HAP-1 (cell line): ENCODE measurements at regions of chrX and their contacts with region 1.

Region 1: GRCh38 chrX:154534862-154535670 is 11.6 kb downstream of the G6PD start:
- DNase-seq: peak; percentile 87 to 95
- H3K4me3 ChIP-seq: no peak overlapping the region
- H3K4me1 ChIP-seq: no peaks in the 10 kb centered on the region
- H3K27me3 ChIP-seq: no peaks in the 10 kb centered on the region

Region 2: DNA sequence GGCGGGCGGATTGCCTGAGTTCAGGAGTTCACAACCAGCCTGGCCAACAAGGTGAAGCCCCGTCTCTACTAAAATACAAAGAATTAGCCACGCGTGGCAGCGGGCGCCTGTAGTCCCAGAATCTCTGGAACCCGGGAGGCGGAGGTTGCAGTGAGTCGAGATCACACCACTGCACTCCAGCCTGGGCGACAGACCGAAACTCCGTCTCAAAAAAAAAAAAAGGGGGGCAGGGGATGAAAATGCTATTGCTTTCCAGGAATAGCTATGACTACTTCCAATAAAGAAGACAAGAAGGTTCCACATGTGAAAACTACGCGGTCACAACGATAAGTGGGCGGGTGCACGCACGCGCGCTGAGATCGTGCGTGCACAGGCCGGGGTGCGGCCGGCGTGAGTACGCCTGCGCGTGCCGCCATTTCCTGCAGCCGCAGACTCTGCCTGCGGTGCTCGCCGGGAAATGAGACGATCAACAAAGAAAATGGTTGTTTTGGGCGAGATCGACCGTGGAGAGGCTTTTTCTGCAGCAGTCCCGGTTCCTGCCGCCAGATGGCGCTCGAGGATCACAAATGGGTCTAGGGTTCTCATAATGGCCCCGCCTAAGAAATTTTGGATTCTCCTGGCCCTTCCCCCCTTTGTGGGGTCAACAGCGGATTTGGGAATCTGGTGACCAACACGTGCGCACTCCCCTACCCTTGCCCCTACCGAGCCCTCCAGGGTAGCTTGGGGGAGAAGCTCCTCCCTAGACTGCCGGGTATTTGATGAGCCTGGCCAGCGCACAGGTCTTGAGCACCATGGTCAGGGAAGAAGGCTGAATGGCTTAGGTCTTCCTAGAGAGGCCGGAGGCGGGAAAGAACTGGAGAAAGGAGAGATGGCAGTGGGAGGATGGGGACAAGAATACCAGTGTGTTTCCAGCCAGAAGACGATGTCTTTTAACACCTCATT is 1576.3 kb before region 1 on chrX:
- in situ Hi-C with region 1: loop called (anchors 25 kb)
- DNase-seq: peak; percentile 86 to 96
- H3K4me3 ChIP-seq: no peak overlapping the region
- H3K4me1 ChIP-seq: peaks cover 4% of the 10 kb centered on the region; the same call in 1 of the 2 replicates
- H3K27me3 ChIP-seq: no peaks in the 10 kb centered on the region

Region 3: GRCh38 chrX:154019633-154020528 is 515.2 kb before region 1 on chrX and contains the start of gene IRAK1:
- in situ Hi-C with region 1: loop called (anchors 25 kb)
- DNase-seq: peak; percentile 33 to 70
- H3K4me3 ChIP-seq: peak within 1 kb of the TSS; percentile 53
- H3K4me1 ChIP-seq: peaks cover 48% of the 10 kb centered on the region
- H3K27me3 ChIP-seq: no peaks in the 10 kb centered on the region

Region 4: GRCh38 chrX:154097597-154098541 is 437.2 kb before region 1 on chrX and contains the start of gene MECP2:
- in situ Hi-C with region 1: loop called (anchors 25 kb)
- DNase-seq: peak; percentile 94 to 99
- H3K4me3 ChIP-seq: peak within 1 kb of the TSS; percentile 45
- H3K4me1 ChIP-seq: peaks cover 33% of the 10 kb centered on the region
- H3K27me3 ChIP-seq: no peaks in the 10 kb centered on the region

Region 5: GRCh38 chrX:154370882-154371770 is 163.9 kb before region 1 on chrX:
- in situ Hi-C with region 1: loop called (anchors 25 kb)
- DNase-seq: peak; percentile 94 to 99
- H3K4me3 ChIP-seq: peak overlapping the region; percentile 77
- H3K4me1 ChIP-seq: peaks cover 36% of the 10 kb centered on the region
- H3K27me3 ChIP-seq: no peaks in the 10 kb centered on the region

Region 6: DNA sequence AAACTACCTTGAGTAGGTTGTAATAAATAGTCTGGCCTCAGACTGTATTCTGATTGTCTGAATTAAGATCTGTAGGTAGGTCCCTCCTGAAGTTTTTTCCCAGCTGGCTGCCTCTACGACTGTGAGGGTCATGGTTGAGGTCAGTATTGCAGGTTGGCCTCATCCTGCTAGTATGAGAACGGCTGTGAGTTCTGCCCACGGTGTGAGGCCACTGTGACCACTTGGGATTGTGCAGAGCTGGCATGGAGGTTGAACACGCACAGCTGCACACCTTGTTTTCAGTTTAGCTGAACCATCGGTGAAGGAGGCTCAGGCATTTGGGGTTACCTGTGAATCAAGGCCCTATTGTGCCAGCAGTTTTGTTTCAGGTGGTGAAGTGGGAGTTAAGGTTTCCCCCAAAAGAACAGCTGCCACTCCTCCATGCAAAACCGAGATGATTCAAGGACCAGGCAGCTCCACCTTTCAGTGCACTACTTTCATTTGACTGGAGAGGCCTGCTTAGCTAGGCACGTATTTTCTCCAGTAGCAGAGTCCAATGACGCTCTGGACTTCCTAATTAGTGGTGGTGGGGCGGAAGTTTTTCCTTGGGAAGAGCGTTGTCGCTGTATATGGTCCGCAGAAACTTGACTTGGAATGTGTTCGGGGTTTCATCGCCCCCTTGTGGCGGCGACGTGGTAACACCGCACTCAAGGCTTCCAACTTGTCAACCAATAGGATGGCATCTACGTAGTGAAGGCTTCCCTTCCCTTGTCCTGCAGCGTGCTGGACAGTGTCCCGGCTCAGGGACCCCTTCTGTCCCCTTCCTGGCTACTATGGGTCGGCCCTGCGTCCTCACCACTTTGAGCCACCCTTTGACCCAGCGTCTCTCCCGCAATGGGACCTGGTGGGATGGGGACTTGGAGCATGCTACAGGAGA is 522.1 kb after region 1 on chrX:
- in situ Hi-C with region 1: no loop called
- DNase-seq: peak; percentile 77 to 82
- H3K4me3 ChIP-seq: no peak overlapping the region
- H3K4me1 ChIP-seq: peaks cover 8% of the 10 kb centered on the region
- H3K27me3 ChIP-seq: no peaks in the 10 kb centered on the region